SK-N-SH (cell line): ENCODE measurements at regions of chr7 and their contacts with region 1.

Region 1: GRCh38 chr7:24290004-24290641 is 6.1 kb downstream of the NPY start:
- DNase-seq: peak; percentile 69
- H3K4me3 ChIP-seq: no peak overlapping the region
- H3K27ac ChIP-seq: no peak overlapping the region
- H3K4me1 ChIP-seq: peaks cover 0 to 5% of the 10 kb centered on the region in 2 experiments; a peak in 2 of 4 replicates
- H3K27me3 ChIP-seq: peaks cover 20% of the 10 kb centered on the region
- CTCF ChIP-seq: peak; percentile 51
- EP300 ChIP-seq: no peak
- RAD21 ChIP-seq: peak; percentile 85

Region 2: DNA sequence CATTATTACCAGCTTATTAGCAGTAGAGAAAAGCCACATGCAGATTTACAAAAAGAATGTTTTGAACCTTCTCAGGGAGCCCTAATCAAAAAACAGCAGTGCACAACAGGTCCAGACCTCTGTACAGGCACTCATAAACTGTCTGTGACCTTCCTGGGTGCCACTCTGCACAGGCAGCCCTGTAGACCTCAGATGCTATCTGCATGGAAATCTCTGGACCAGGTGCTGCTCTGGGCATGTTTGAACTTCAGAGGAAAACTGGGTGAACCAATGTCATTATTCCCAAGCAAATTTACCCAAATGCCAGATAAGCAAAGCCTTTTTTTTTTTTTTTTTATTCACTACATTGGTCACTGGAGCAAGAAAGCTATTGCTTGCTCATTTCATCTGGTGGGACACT is 98.1 kb after region 1 on chr7:
- CTCF ChIA-PET with region 1: interaction called, 10 read pairs
- POLR2A ChIA-PET with region 1: no interaction called
- DNase-seq: no peak
- H3K4me3 ChIP-seq: no peak overlapping the region
- H3K27ac ChIP-seq: peak overlapping the region in 1 of 2 experiments; percentile 6; a peak in 1 of 4 replicates
- H3K4me1 ChIP-seq: peaks cover 0 to 5% of the 10 kb centered on the region in 2 experiments; a peak in 2 of 4 replicates
- H3K27me3 ChIP-seq: no peaks in the 10 kb centered on the region
- CTCF ChIP-seq: no peak
- EP300 ChIP-seq: no peak
- RAD21 ChIP-seq: no peak